A549 (cell line): ENCODE measurements at regions of chr19 and their contacts with region 1.

Region 1: DNA sequence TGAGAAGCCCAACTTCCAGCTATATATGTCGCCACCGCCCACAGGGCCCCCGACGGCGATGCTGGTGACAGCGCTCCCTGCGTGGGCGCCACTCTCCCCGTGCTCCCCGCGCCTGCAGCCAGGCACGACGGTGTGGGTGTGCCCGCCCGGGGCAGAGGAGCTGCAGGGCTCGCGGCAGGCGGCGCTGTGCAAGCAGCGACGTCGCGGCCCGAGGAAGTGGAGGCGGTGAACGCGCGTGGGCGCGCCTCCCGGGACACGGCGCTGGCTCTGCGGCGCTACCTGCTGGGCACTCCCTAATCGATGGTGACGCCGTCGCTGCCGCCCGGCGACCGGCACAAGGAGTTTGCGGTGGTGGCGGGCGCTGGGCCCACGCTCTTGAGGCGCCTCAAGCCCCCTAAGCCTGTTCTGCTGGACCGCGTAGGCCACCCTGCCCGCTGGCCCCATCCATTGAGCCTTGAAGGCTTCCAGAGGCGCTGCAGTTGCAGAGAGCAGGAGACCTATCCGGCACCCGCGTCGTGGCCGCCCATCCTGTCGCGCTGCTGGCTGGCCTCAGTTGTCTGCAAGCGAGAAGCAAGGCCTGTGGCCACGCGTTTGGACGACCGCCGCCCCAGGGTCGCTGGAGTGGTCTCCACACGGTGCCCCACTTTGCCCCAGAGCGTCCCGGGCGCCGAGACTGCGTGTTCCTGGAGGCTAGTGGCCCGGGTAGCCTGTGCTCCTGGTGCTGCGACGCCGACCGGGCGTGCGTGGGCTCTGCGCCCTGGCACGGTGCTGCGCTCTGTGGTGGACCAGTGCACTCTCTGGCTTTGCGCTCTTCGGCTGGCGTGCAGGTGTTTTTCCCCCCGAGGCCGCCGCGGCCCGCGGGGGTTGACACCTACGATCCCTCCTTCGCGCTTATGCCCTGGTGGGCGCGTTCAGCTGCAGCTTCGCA is 23.1 kb downstream of the LRFN3 start:
- DNase-seq: no peak
- ATAC-seq: peak; percentile 68 to 80
- H3K4me3 ChIP-seq: peak overlapping the region; percentile 21; the same call in 2 of the 3 replicates
- H3K27ac ChIP-seq: no peak overlapping the region
- H3K4me1 ChIP-seq: peaks cover 7% of the 10 kb centered on the region; the same call in 2 of the 3 replicates
- CTCF ChIP-seq: peak; percentile 43
- EP300 ChIP-seq: no peak
- POLR2A ChIP-seq: no peak
- RAD21 ChIP-seq: peak in 1 of 2 experiments; percentile 20; a peak in 1 of 5 replicates

Region 2: DNA sequence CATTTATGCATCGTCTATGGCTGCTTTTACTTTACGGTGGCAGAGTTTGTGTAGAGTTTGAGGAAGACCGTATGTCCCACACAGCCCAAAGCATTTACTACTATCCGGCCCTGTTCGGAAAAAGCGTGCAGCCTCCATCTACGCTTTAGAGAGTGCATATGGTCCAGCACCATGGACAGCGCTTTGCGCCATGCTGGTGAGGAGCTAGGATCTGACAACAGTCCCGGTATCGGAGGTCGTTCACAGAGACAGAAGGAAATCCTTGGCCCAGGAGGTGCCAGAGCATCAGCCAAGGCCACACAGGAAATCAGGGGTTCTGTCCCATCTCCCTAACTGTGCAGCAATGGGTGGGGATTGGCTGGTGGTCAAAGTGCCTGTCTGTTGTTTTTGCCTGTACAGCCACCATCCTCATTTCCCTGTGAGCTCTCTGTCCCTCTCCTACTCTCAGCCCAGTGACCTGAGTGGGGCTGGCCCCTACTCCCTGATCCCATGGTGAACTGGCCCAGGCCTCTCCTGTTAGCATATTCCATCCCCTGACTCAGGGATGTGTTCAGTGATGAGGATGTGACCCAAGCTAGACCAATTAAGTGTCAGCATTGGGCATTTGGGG is 130.5 kb before region 1 on chr19:
- CTCF ChIA-PET with region 1: no interaction called
- POLR2A ChIA-PET with region 1: no interaction called
- DNase-seq: peak; percentile 59 to 70
- ATAC-seq: peak; percentile 71 to 85; a peak in 5 of 6 replicates
- H3K4me3 ChIP-seq: no peak overlapping the region
- H3K27ac ChIP-seq: no peak overlapping the region
- H3K4me1 ChIP-seq: no peaks in the 10 kb centered on the region
- CTCF ChIP-seq: no peak
- EP300 ChIP-seq: no peak
- POLR2A ChIP-seq: no peak
- RAD21 ChIP-seq: no peak

Region 3: GRCh38 chr19:35977446-35978222 is 18.3 kb after region 1 on chr19:
- CTCF ChIA-PET with region 1: interaction called, 10 read pairs
- POLR2A ChIA-PET with region 1: no interaction called
- DNase-seq: peak; percentile 66 to 76
- ATAC-seq: peak; percentile 61 to 84
- H3K4me3 ChIP-seq: no peak overlapping the region
- H3K27ac ChIP-seq: no peak overlapping the region
- H3K4me1 ChIP-seq: no peaks in the 10 kb centered on the region
- CTCF ChIP-seq: 0 out of 3 replicates have a peak, but pooled peaks have one; percentile 13
- EP300 ChIP-seq: no peak
- POLR2A ChIP-seq: no peak
- RAD21 ChIP-seq: no peak; a peak in 1 of 5 replicates

Region 4: DNA sequence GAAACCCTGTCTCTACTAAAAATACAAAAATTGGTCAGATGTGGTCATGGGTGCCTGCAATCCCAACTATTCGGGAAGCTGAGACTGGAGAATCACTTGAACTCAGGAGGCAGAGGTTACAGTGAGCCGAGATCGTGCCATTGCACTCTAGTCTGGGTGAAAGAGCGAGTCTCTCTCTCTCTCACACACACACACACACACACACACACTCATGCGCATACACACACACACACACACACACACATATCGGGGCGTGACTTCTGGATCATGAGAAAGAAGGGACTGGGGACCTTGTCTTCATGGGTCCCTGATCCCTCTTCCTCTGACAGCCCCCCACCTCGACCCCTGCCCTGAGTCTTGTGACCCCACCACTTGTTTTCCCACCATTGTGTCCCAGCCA is 23.9 kb after region 1 on chr19:
- CTCF ChIA-PET with region 1: interaction called, 10 read pairs
- POLR2A ChIA-PET with region 1: no interaction called
- DNase-seq: no peak
- ATAC-seq: no peak
- H3K4me3 ChIP-seq: no peak overlapping the region
- H3K27ac ChIP-seq: no peak overlapping the region
- H3K4me1 ChIP-seq: no peaks in the 10 kb centered on the region
- CTCF ChIP-seq: no peak
- EP300 ChIP-seq: no peak
- POLR2A ChIP-seq: no peak
- RAD21 ChIP-seq: no peak

Region 5: GRCh38 chr19:36051236-36051635 is 91.9 kb after region 1 on chr19:
- CTCF ChIA-PET with region 1: no interaction called
- POLR2A ChIA-PET with region 1: no interaction called
- DNase-seq: peak in 1 of 2 experiments; percentile 67
- ATAC-seq: no peak
- H3K4me3 ChIP-seq: no peak overlapping the region
- H3K27ac ChIP-seq: no peak overlapping the region
- H3K4me1 ChIP-seq: peaks cover 14% of the 10 kb centered on the region
- CTCF ChIP-seq: peak; percentile 53
- EP300 ChIP-seq: no peak
- POLR2A ChIP-seq: no peak
- RAD21 ChIP-seq: peak; percentile 34 to 48; a peak in 3 of 5 replicates

Region 6: GRCh38 chr19:36139473-36140303 is 180.4 kb after region 1 on chr19 and contains the start of gene CAPNS1:
- CTCF ChIA-PET with region 1: no interaction called
- POLR2A ChIA-PET with region 1: no interaction called
- DNase-seq: peak; percentile 99
- ATAC-seq: peak; percentile 77 to 85
- H3K4me3 ChIP-seq: peak within 1 kb of the TSS; percentile 75
- H3K27ac ChIP-seq: peak within 1 kb of the TSS; percentile 93 to 95
- H3K4me1 ChIP-seq: peaks cover 37% of the 10 kb centered on the region
- CTCF ChIP-seq: peak; percentile 17; the same call in 1 of the 3 replicates
- EP300 ChIP-seq: no peak; a peak in 1 of 5 replicates
- POLR2A ChIP-seq: peak; percentile 83
- RAD21 ChIP-seq: peak in 1 of 2 experiments; percentile 7; a peak in 1 of 5 replicates
- polyA plus RNA-seq, gene CAPNS1: 1,014 and 1,236 TPM in 2 replicates